CD4-positive, alpha-beta T cell (primary cell): ENCODE measurements at regions of chr14 and their contacts with region 1.

Region 1: DNA sequence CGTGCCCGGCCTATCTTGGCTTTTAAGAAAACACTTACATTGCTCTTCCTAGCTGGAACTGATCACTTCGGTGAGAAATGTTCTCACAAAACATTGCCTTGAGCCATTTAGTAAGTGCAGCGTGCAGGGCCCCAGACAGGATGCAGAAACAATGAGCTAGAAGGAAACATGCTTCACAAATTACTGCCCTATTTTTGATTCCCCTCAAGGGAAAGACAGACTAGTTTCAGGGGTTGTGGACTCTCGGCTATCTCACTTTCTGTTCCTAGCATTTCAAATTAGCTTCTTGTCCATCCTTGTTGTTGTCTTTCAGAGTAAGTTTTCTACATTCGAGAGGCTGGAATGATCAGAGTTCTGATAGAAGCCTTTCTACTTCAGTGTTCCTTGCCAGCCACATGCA is 21.6 kb downstream of the TGFB3 start:
- DNase-seq: no peak
- ATAC-seq: no peak
- H3K4me3 ChIP-seq: no peak overlapping the region
- H3K4me3 Mint-ChIP-seq: no peak overlapping the region
- H3K27ac ChIP-seq: no peak overlapping the region
- H3K27ac Mint-ChIP-seq: no peak overlapping the region
- H3K4me1 ChIP-seq: no peaks in the 10 kb centered on the region
- H3K4me1 Mint-ChIP-seq: no peaks in the 10 kb centered on the region
- H3K27me3 ChIP-seq: no peaks in the 10 kb centered on the region
- H3K27me3 Mint-ChIP-seq: no peaks in the 10 kb centered on the region
- CTCF ChIP-seq: no peak

Region 2: DNA sequence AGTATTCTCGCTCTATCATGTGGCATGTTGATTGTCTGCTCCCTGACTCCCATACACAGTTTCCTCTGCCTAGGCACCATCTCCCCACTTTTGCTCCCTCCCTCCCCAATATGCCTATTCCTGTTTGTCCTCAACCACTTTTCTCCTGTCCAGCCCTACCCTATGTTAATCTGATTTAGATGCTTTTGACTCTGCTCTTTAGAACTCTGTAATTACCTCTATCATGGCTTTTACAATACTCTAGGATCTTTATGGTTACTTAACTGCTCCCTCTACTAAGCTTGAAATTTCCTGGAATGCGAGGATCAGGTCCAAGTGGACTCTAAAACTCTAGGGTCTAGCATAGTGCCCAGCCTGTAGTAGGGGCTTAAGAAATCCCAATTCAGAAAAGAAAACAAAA is 47.0 kb before region 1 on chr14:
- CTCF ChIA-PET with region 1: no interaction called
- POLR2A ChIA-PET with region 1: no interaction called
- intact Hi-C with region 1: loop called in 1 of 2 experiments (anchors 1 kb)
- DNase-seq: no peak
- ATAC-seq: no peak
- H3K4me3 ChIP-seq: no peak overlapping the region
- H3K4me3 Mint-ChIP-seq: no peak overlapping the region
- H3K27ac ChIP-seq: no peak overlapping the region
- H3K27ac Mint-ChIP-seq: no peak overlapping the region
- H3K4me1 ChIP-seq: no peaks in the 10 kb centered on the region
- H3K4me1 Mint-ChIP-seq: no peaks in the 10 kb centered on the region
- H3K27me3 ChIP-seq: no peaks in the 10 kb centered on the region
- H3K27me3 Mint-ChIP-seq: no peaks in the 10 kb centered on the region
- CTCF ChIP-seq: no peak

Region 3: GRCh38 chr14:76876076-76876475 is 915.8 kb after region 1 on chr14:
- CTCF ChIA-PET with region 1: no interaction called
- POLR2A ChIA-PET with region 1: no interaction called
- intact Hi-C with region 1: no loop called
- DNase-seq: peak in 13 of 14 experiments; percentile 22 to 73 (median 35)
- ATAC-seq: peak; percentile 64
- H3K4me3 ChIP-seq: no peak overlapping the region
- H3K4me3 Mint-ChIP-seq: no peak overlapping the region
- H3K27ac ChIP-seq: no peak overlapping the region
- H3K27ac Mint-ChIP-seq: no peak overlapping the region
- H3K4me1 ChIP-seq: peaks cover 3% of the 10 kb centered on the region
- H3K4me1 Mint-ChIP-seq: peaks cover 4% of the 10 kb centered on the region
- H3K27me3 ChIP-seq: no peaks in the 10 kb centered on the region
- H3K27me3 Mint-ChIP-seq: no peaks in the 10 kb centered on the region
- CTCF ChIP-seq: peak; percentile 87